Right ventricle myocardium superior (tissue), 1 donor: ENCODE measurements at regions of chr5 and their contacts with region 1.

Region 1: GRCh38 chr5:115319007-115319406 is 22.6 kb upstream of the CCDC112 start:
- DNase-seq: no peak
- ATAC-seq: peak; percentile 73

Region 2: GRCh38 chr5:115571441-115571878 is 252.5 kb after region 1 on chr5:
- intact Hi-C with region 1: loop called (anchors 5 kb)
- DNase-seq: no peak
- ATAC-seq: peak; percentile 88